Head of caudate nucleus (tissue), 42 donors: ENCODE measurements at regions of chr5 and their contacts with region 1.

Region 1: DNA sequence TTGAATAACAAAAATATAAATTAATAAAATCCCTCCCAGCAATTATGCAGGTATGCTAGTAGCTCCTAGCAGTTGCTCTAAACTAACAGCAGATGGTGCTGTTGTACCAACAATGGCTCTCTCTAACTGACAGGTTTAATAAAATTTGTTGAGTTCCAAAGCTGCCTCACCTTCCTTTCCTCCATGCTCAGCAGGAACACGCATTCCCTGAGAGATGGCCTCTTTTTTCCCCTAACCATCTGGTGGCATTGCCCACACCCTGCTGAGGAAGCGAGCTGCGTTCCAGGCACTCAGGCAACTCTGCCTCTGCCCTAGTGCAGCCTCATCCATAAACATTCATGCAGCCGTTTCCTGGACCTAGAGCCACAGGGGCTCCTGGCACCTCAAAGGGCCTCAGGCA is 106.2 kb downstream of the KLHL3 start:
- DNase-seq: peak in 15 of 42 donors; percentile 27 to 73 (median 45)

Region 2: DNA sequence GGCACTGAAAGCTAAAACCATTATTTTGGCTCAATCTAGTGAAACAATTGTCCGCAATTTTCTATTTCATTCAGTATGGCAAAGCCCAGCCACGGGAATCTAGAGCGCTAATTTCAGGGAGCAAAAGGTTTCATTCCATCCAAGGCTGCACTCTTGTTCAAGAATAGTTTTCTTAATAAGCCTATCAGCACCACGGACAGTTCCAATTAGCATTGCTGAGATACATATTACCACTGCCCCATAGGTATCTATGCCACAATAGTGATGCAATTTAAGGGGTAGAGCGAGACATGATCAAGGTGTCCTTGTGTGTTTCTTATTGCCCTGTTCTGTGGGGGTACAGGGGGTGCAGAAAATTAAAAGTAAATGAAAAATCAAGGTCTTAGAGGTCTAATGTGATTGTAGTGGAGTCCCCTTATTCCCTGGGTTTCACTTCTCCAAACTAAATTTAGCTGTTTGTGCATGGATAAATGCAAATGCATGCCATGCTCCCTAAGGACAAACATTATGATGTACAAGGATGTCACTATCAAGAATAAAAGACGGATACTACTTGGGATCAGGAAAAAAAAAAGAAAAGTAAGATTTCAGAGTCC is 176.1 kb before region 1 on chr5:
- intact Hi-C with region 1: no loop called
- DNase-seq: no peak

Region 3: DNA sequence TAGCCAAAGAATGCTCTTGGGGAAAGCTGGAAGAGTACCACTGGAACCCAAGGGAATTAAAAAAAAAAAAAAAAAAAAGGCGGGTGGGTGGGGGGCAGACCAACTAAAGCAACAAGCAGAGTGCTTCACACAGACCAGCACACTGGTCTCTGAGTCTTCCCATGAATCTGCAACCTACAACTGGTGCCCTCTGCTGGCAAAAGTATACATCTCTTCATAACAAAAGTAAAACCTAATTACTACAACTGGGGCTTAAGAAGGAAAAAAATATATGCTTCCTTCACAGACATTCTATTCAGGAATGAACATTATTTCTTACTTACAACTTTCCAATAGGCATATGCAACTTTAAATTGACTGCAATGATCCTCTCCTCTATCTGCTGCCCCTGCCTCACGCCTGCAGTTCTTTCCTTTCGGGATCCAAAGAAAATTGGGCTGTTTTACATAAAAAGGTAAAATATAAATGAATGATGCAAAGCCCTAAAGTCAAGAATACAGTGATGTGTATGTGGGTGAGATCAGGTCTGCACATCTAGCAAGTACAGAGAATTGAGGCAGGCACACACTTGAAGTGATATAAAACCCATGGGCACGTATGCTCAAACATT is 113.5 kb after region 1 on chr5:
- intact Hi-C with region 1: loop called (anchors 5 kb)
- DNase-seq: peak in 35 of 42 donors; percentile 30 to 83 (median 56)